ENCODE measurements at regions of chr20 and their contacts with region 1.

Region 1: GRCh38 chr20:46022411-46023147 is 6.4 kb upstream of the SLC12A5 start:
- DNase-seq: peak; percentile 88
- ATAC-seq: peak; percentile 60
- H3K4me3 Mint-ChIP-seq: peak overlapping the region; percentile 57
- H3K27ac Mint-ChIP-seq: no peak overlapping the region
- H3K4me1 Mint-ChIP-seq: peaks cover 17% of the 10 kb centered on the region
- H3K27me3 Mint-ChIP-seq: peaks cover 29% of the 10 kb centered on the region

Region 2: GRCh38 chr20:45758068-45758467 is 264.5 kb before region 1 on chr20:
- CTCF ChIA-PET with region 1: no interaction called
- POLR2A ChIA-PET with region 1: no interaction called
- intact Hi-C with region 1: no loop called
- DNase-seq: no peak
- ATAC-seq: no peak
- H3K4me3 Mint-ChIP-seq: no peak overlapping the region
- H3K27ac Mint-ChIP-seq: no peak overlapping the region
- H3K4me1 Mint-ChIP-seq: peaks cover 10% of the 10 kb centered on the region
- H3K27me3 Mint-ChIP-seq: peaks cover 12% of the 10 kb centered on the region

Region 3: DNA sequence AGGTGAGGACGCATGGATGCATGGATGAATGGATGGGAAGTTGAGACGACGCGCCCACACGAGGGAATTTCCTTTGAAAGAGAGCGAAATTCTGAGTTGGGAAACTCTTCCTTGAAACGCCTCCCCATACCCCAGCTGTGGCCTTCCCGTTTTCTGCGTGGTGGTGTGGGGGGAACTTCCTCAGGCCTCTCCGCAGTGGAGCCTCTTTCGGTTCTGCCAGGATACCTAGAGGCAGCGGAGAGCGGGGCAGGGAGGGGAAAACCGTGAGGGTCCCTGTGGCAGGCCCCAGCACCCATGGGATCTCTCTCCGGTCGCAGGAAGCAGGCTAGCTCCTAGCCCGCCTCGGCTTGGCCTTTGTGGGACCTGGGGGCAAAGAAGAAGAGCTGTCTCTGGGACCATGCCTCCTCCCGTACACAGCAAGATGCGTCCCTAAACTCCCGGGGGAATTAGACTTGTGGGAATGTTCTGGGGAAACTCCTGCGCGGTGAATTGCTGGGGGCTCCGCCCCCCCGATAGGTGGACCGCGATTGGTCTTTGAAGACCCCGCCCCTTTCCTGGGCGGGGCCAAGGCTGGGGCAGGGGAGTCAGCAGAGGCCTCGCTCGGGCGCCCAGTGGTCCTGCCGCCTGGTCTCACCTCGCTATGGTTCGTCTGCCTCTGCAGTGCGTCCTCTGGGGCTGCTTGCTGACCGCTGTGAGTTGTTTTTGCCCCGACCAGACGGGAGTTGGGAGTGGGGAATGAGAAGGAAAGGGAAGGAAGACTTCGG is 95.3 kb after region 1 on chr20 and contains the start of gene CD40:
- CTCF ChIA-PET with region 1: no interaction called
- POLR2A ChIA-PET with region 1: no interaction called
- intact Hi-C with region 1: loop called in 1 of 2 experiments (anchors 1 kb)
- DNase-seq: peak; percentile 81
- ATAC-seq: peak; percentile 98
- H3K4me3 Mint-ChIP-seq: peak within 1 kb of the TSS; percentile 90
- H3K27ac Mint-ChIP-seq: peak within 1 kb of the TSS; percentile 78
- H3K4me1 Mint-ChIP-seq: peaks cover 11% of the 10 kb centered on the region
- H3K27me3 Mint-ChIP-seq: peaks cover 17% of the 10 kb centered on the region
- total RNA-seq, gene CD40: 4.0 to 5.1 TPM

Region 4: GRCh38 chr20:46174469-46175128 is 152.0 kb after region 1 on chr20:
- CTCF ChIA-PET with region 1: interaction called, 4 read pairs
- POLR2A ChIA-PET with region 1: no interaction called
- intact Hi-C with region 1: loop called (anchors 1 kb)
- DNase-seq: peak; percentile 88
- ATAC-seq: peak; percentile 97
- H3K4me3 Mint-ChIP-seq: no peak overlapping the region
- H3K27ac Mint-ChIP-seq: no peak overlapping the region
- H3K4me1 Mint-ChIP-seq: no peaks in the 10 kb centered on the region
- H3K27me3 Mint-ChIP-seq: peaks cover 37% of the 10 kb centered on the region

Region 5: DNA sequence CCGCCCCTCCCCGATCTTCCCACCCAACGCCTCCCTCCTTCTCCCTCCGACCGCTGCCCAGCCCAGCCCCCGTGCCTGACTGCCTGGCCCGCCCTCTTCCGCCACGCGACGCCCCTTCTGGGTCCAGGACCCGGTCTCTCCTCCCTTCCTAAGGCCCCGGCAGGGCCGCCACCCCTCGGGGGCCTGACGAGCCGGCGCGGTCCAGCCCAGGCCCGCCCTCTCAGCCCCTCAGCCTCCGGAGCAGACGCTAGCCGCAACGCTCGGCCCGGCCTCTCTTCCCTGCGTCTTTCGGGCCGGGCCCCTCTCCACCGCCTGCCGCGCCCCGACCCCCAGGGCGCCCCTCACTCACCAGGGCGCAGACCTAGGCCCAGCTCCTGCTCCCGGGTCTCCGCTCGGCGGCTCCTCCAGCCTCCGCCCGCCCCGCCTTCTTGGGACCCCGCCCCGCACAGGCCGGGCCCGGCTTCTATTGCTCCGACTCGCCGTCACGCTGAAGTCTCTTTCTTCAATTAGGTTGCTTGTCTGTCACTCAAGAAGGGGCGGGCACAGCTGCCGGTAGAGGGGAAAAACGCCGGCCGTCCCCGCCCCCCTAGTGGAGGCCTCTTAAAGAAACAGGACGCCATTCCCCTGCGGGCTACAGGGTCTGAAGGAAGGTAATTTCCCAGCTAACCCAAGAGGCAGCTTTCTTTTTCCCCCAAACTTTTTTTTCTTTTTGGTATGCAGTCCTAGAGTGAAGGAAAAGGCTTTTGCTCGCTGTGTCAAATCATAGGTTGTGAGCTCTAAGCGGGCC is 383.8 kb after region 1 on chr20 and contains the start of gene ELMO2:
- CTCF ChIA-PET with region 1: interaction called, 4 read pairs
- POLR2A ChIA-PET with region 1: no interaction called
- intact Hi-C with region 1: loop called in 1 of 2 experiments (anchors 2 kb)
- DNase-seq: peak; percentile 98
- ATAC-seq: peak; percentile 85
- H3K4me3 Mint-ChIP-seq: peak within 1 kb of the TSS; percentile 88
- H3K27ac Mint-ChIP-seq: peak within 1 kb of the TSS; percentile 85
- H3K4me1 Mint-ChIP-seq: peaks cover 65% of the 10 kb centered on the region
- H3K27me3 Mint-ChIP-seq: no peaks in the 10 kb centered on the region
- total RNA-seq, gene ELMO2: 47.4 to 54.6 TPM

Measured in activated CD4-positive, alpha-beta T cell treated with anti-CD3 and anti-CD28 coated beads for 36 hours (primary cell).